ENCODE measurements at regions of chr6 and their contacts with region 1.

Region 1: DNA sequence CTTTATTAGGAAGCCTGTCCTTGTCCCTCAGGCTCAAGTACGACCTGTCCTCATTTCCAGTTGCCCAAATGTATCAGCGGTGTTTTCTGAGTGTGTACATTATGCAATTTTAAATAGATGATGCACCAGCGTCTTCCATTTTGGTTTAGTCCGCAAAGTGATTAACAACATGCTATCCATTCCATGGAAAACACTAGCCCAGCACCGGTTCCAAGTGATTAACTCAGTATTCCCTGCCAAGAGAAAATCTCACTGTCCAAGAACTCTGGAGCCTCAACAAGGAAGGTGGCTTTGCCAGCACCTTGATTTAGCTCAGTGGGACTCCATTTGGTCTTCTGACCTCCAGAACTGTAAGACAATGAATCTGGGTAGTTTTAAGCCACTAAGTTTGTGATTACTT is 107.1 kb downstream of the FOXC1 start:
- DNase-seq: no peak
- H3K4me3 ChIP-seq: no peak overlapping the region
- H3K27ac ChIP-seq: no peak overlapping the region
- H3K4me1 ChIP-seq: no peaks in the 10 kb centered on the region
- H3K27me3 ChIP-seq: no peaks in the 10 kb centered on the region
- CTCF ChIP-seq: no peak

Region 2: GRCh38 chr6:1486387-1486786 is 230.5 kb before region 1 on chr6:
- CTCF ChIA-PET with region 1: no interaction called
- dilution Hi-C with region 1: no loop called
- in situ Hi-C with region 1: no loop called
- intact Hi-C with region 1: no loop called
- DNase-seq: peak; percentile 71
- H3K4me3 ChIP-seq: no peak overlapping the region
- H3K27ac ChIP-seq: peak overlapping the region; percentile 80
- H3K4me1 ChIP-seq: peaks cover 33% of the 10 kb centered on the region
- H3K27me3 ChIP-seq: no peaks in the 10 kb centered on the region
- CTCF ChIP-seq: no peak

Region 3: DNA sequence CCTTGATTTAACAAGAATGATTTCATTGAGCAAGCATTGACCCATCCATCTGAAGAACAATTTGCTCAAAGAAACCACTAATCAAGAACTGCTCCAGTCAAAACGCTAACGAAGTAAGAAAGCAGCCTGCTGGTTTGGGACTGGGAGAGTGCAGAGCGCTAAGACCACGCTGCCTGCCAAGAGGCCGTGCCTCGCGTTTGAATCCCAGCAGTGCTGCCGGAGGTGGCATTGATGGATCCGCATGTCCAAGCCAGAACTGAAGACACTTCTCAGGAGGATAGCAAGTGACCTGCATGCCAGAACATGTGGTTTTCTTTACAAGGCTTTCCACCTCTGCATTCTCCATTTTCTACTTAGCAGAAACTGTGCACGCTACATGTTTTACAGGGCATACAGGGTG is 212.4 kb before region 1 on chr6:
- CTCF ChIA-PET with region 1: no interaction called
- dilution Hi-C with region 1: no loop called
- in situ Hi-C with region 1: no loop called
- intact Hi-C with region 1: no loop called
- DNase-seq: no peak
- H3K4me3 ChIP-seq: no peak overlapping the region
- H3K27ac ChIP-seq: no peak overlapping the region
- H3K4me1 ChIP-seq: no peaks in the 10 kb centered on the region
- H3K27me3 ChIP-seq: no peaks in the 10 kb centered on the region
- CTCF ChIP-seq: no peak

Region 4: DNA sequence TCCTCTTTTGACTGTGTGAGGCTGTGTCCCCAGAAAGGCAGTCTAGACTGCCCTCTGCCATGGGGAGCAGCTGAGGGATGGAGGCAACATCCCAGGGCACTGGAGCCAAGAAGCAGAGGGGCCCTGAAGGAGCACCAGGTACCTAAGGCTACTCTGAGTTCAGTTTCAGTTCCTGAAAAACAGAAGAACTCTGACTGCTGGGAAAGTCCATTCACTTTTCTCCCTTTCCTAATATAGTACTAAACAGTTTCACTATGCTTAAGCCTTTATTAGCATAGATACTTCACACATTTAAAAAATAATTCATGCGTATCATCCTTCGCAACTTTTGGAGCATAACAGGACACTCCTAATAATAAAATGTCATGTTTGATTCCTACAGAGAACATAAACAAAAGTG is 22.8 kb after region 1 on chr6:
- CTCF ChIA-PET with region 1: no interaction called
- dilution Hi-C with region 1: no loop called
- in situ Hi-C with region 1: no loop called
- intact Hi-C with region 1: loop called (anchors 1 kb)
- DNase-seq: no peak
- H3K4me3 ChIP-seq: no peak overlapping the region
- H3K27ac ChIP-seq: no peak overlapping the region
- H3K4me1 ChIP-seq: no peaks in the 10 kb centered on the region
- H3K27me3 ChIP-seq: no peaks in the 10 kb centered on the region
- CTCF ChIP-seq: no peak

Region 5: GRCh38 chr6:1757131-1757530 is 40.3 kb after region 1 on chr6:
- CTCF ChIA-PET with region 1: no interaction called
- dilution Hi-C with region 1: no loop called
- in situ Hi-C with region 1: no loop called
- intact Hi-C with region 1: no loop called
- DNase-seq: peak; percentile 17
- H3K4me3 ChIP-seq: no peak overlapping the region
- H3K27ac ChIP-seq: no peak overlapping the region
- H3K4me1 ChIP-seq: peaks cover 13% of the 10 kb centered on the region
- H3K27me3 ChIP-seq: no peaks in the 10 kb centered on the region
- CTCF ChIP-seq: no peak